ENCODE measurements at regions of chr10 and their contacts with region 1.

Region 1: GRCh38 chr10:115417585-115418265 is 324.6 kb downstream of the ATRNL1 start:
- DNase-seq: no peak
- H3K4me3 ChIP-seq: no peak overlapping the region
- H3K27ac ChIP-seq: no peak overlapping the region
- H3K4me1 ChIP-seq: no peaks in the 10 kb centered on the region
- H3K27me3 ChIP-seq: no peaks in the 10 kb centered on the region
- CTCF ChIP-seq: peak; percentile 23

Region 2: DNA sequence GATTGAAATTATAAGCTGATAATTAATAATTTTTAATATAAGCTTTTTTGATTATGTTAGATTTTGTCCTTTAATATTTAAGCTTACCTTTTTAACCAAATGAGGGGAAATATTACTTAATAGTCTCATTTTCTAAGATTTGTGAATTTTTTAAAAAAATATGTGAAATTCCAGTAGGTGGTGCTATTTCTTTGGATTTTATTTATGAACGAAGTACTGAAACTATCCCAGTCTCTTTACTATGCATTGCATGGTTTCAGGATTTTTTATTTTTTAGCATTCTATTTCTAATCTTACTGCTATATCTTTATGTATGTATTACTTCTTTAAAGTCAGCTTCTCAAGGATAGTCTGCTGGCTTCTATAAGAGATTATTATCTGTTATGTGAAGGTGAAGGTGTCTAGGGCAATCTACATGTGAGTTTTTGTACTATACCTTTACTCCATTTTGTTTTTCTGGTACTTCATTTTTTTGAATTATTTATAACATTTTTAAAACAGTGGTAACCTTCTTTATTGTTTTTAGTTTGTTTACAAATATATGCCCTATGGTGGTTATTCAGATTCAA is 246.2 kb before region 1 on chr10:
- intact Hi-C with region 1: loop called (anchors 10 kb)
- DNase-seq: no peak
- H3K4me3 ChIP-seq: no peak overlapping the region
- H3K27ac ChIP-seq: no peak overlapping the region
- H3K4me1 ChIP-seq: no peaks in the 10 kb centered on the region
- H3K27me3 ChIP-seq: no peaks in the 10 kb centered on the region
- CTCF ChIP-seq: peak; percentile 27

Measured in colonic mucosa (tissue), 4 donors.